CD4-positive, alpha-beta memory T cell (primary cell): ENCODE measurements at regions of chr2 and their contacts with region 1.

Region 1: DNA sequence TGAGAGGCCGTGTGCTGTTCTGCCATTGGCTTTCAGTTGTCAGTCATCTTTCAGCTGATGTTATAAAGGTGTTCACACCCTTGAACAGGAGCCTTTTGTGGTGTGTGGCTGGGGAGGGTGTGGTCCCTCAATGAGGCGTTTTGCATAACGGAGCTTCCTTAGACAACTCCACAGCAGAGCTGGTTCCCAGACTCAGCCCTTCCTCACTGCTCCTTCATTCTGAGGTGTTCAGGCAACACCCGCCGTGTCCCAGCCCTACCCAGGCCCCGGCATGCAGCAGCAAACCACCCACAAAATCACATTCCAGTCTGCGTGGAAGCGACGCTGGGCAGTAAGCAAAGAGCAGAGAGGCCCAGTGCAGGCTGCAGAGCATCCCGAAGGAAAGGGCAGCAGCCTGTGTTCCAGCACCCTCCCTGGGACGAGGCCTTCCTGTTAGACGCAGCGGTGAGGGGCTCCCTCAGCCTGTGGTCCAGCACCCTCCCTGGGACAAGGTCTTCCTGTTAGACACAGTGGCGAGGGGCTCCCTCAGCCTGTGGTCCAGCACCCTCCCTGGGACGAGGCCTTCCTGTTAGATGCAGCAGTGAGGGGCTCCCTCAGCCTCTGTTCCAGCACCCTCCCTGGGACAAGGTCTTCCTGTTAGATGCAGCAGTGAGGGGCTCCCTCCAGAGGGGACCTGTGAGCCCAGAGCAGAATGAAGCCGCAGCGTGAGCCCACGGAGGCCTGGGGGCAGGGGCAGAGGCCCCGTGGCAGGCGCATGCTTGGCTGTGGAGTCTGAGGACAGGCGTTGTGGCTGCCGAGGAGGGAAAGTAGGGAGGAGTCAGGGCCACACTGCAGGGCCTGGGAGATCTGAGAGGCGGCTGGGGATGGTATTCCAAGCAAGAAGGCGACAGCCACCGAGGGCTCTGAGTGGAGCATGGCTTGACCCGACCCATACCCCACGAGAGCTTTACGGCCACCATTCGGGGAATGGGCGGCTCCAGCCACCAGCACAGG is 201.8 kb upstream of the HDAC4 start:
- DNase-seq: peak in 4 of 5 donors; percentile 38 to 68 (median 54)
- H3K4me3 ChIP-seq: peak overlapping the region in 1 of 2 donors; percentile 19
- H3K4me3 Mint-ChIP-seq: peak overlapping the region in 7 of 8 donors; percentile 31 to 77 (median 69)
- H3K27ac ChIP-seq: no peak overlapping the region
- H3K27ac Mint-ChIP-seq: peak overlapping the region; percentile 52 to 96 (median 89)
- H3K4me1 ChIP-seq: peaks cover 30% of the 10 kb centered on the region
- H3K4me1 Mint-ChIP-seq: peaks cover 18 to 41% (median 29%) of the 10 kb centered on the region in 4 donors
- H3K27me3 ChIP-seq: no peaks in the 10 kb centered on the region
- H3K27me3 Mint-ChIP-seq: no peaks in the 10 kb centered on the region

Region 2: GRCh38 chr2:238644095-238645081 is 958.2 kb before region 1 on chr2:
- CTCF ChIA-PET with region 1: no interaction called
- POLR2A ChIA-PET with region 1: no interaction called
- intact Hi-C with region 1: no loop called
- DNase-seq: no peak
- H3K4me3 ChIP-seq: no peak overlapping the region
- H3K4me3 Mint-ChIP-seq: no peak overlapping the region
- H3K27ac ChIP-seq: no peak overlapping the region
- H3K27ac Mint-ChIP-seq: no peak overlapping the region
- H3K4me1 ChIP-seq: no peaks in the 10 kb centered on the region
- H3K4me1 Mint-ChIP-seq: peaks cover 0 to 2% (median 0%) of the 10 kb centered on the region in 4 donors
- H3K27me3 ChIP-seq: no peaks in the 10 kb centered on the region
- H3K27me3 Mint-ChIP-seq: peaks cover 4 to 7% of the 10 kb centered on the region in 2 donors

Region 3: GRCh38 chr2:239621611-239622010 is 19.0 kb after region 1 on chr2:
- CTCF ChIA-PET with region 1: interaction called, 3 read pairs
- POLR2A ChIA-PET with region 1: interaction called, 16 read pairs
- intact Hi-C with region 1: loop called (anchors 2 kb)
- DNase-seq: no peak
- H3K4me3 ChIP-seq: no peak overlapping the region
- H3K4me3 Mint-ChIP-seq: peak overlapping the region in 1 of 8 donors; percentile 4
- H3K27ac ChIP-seq: no peak overlapping the region
- H3K27ac Mint-ChIP-seq: peak overlapping the region in 3 of 7 donors; percentile 31 to 73 (median 42)
- H3K4me1 ChIP-seq: peaks cover 70% of the 10 kb centered on the region
- H3K4me1 Mint-ChIP-seq: peaks cover 49 to 76% (median 58%) of the 10 kb centered on the region in 4 donors
- H3K27me3 ChIP-seq: no peaks in the 10 kb centered on the region
- H3K27me3 Mint-ChIP-seq: no peaks in the 10 kb centered on the region

Region 4: GRCh38 chr2:239629926-239630617 is 27.5 kb after region 1 on chr2:
- CTCF ChIA-PET with region 1: interaction called, 3 read pairs
- POLR2A ChIA-PET with region 1: interaction called, 10 read pairs
- intact Hi-C with region 1: no loop called
- DNase-seq: no peak
- H3K4me3 ChIP-seq: no peak overlapping the region
- H3K4me3 Mint-ChIP-seq: no peak overlapping the region
- H3K27ac ChIP-seq: no peak overlapping the region
- H3K27ac Mint-ChIP-seq: peak overlapping the region in 5 of 7 donors; percentile 15 to 68 (median 18)
- H3K4me1 ChIP-seq: peaks cover 34% of the 10 kb centered on the region
- H3K4me1 Mint-ChIP-seq: peaks cover 21 to 47% (median 32%) of the 10 kb centered on the region in 4 donors
- H3K27me3 ChIP-seq: no peaks in the 10 kb centered on the region
- H3K27me3 Mint-ChIP-seq: no peaks in the 10 kb centered on the region